Activated B cell treated with CpG ODN at 0.5 μM for 24 hours (primary cell): ENCODE measurements at regions of chr5 and their contacts with region 1.

Region 1: DNA sequence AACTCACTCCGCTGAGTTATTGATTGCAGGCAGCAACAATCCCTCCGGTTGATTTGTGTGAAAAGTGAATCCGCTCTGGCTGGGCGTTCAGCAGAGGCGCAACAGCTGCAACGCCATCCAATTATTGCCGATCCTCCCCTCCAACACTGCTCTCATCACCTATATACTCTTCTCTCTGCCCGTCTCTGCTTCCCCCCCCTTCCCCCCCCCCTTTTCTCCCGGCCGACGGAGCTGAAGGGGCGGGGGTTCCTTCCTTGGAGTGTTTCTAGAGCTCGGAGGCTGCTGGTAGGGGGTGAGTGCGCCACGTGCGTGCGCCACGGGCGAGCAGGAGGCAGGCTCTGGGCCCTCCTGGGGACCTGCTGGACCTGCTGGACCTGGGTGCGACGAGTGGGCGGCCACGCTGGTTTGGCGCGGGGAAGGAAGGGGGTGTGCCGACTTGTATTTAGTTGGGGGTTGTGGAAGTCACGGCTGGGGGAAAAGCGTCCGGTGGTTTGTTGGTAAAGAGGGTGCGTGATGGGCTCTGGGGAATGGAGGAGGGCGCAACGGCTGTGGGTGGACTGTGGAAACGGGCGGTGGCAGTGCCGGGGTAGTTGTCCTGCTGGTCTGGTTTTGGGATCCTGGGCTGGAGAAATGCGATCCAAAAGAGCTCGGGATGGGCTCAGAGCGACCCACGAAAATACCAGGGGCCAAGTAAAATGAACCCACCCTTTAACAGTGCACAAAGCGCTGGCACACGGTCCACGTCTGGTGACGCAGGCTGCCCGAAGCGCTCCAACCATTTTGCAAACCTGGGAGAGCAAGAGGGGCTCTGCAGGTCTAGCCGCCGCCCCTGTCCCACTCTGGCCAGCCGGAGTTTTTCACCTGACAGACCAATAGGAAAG is 6.4 kb upstream of the MEF2C start:
- DNase-seq: peak; percentile 61
- ATAC-seq: peak; percentile 58
- H3K4me3 Mint-ChIP-seq: peak overlapping the region; percentile 98
- H3K27ac Mint-ChIP-seq: peak overlapping the region; percentile 99
- H3K4me1 Mint-ChIP-seq: peaks cover 66% of the 10 kb centered on the region
- H3K27me3 Mint-ChIP-seq: no peaks in the 10 kb centered on the region
- CTCF ChIP-seq: no peak

Region 2: DNA sequence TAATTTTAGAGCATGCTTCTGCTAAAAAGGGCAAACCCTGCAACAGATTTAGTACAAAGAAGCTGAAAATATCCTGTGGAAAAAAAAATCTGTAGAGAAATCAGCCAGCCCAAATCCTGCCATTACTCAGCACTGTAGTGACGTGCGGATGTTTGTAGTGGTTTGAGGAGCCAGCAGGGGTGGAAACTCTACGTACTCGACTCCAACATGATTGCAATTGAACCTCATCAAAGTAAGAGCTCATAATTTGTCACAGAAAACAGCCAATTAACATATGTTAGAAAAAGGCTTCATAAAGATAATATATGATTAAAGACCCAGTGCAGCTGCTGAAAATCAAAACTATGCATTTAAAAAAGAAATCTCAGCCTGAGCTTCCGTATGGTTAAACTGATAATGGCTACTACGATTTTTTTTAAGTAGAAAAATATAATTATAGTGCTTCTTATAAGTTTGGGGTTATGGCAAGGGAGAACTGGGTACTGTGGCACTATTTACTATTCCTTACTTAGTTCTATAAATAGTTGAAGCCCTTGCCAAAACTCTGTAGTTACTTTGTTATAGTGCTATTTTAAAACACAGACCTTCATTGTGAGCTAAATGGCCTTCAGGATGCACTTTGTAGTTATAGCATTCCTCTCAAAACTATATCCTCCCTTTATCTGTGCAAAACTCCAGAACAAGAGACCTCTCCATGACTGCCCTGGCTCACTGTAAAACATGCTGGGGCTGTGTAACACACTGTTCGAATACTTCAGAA is 55.9 kb before region 1 on chr5:
- CTCF ChIA-PET with region 1: interaction called, 3 read pairs
- POLR2A ChIA-PET with region 1: interaction called, 54 read pairs
- intact Hi-C with region 1: no loop called
- DNase-seq: no peak
- ATAC-seq: peak; percentile 69
- H3K4me3 Mint-ChIP-seq: peak overlapping the region; percentile 66
- H3K27ac Mint-ChIP-seq: peak overlapping the region; percentile 87
- H3K4me1 Mint-ChIP-seq: peaks cover 81% of the 10 kb centered on the region
- H3K27me3 Mint-ChIP-seq: no peaks in the 10 kb centered on the region
- CTCF ChIP-seq: no peak

Region 3: GRCh38 chr5:89268460-89268859 is 379.0 kb after region 1 on chr5:
- CTCF ChIA-PET with region 1: no interaction called
- POLR2A ChIA-PET with region 1: interaction called, 15 read pairs
- intact Hi-C with region 1: loop called (anchors 5 kb)
- DNase-seq: no peak
- ATAC-seq: peak; percentile 27
- H3K4me3 Mint-ChIP-seq: peak overlapping the region; percentile 50
- H3K27ac Mint-ChIP-seq: peak overlapping the region; percentile 92
- H3K4me1 Mint-ChIP-seq: peaks cover 78% of the 10 kb centered on the region
- H3K27me3 Mint-ChIP-seq: no peaks in the 10 kb centered on the region
- CTCF ChIP-seq: no peak

Region 4: DNA sequence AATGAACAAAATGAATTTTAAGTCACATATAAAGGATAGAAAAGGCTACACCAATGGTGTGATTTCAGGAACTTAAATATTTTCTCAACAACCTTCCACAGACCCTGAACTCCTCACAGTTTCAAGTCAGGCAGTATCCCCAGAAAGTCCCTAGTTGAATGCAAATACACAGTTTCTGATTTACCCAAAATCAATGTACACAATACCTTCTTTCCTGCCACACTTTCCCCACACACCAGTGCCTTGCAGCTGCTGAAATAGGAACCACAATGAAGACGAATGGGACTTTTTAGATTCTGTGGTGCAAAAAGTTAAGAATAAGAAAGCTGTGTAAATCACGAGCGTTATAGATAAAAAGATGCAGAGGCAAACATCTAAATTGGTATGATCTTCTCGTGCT is 545.9 kb after region 1 on chr5:
- CTCF ChIA-PET with region 1: no interaction called
- POLR2A ChIA-PET with region 1: interaction called, 11 read pairs
- intact Hi-C with region 1: loop called (anchors 5 kb)
- DNase-seq: no peak
- ATAC-seq: peak; percentile 85
- H3K4me3 Mint-ChIP-seq: peak overlapping the region; percentile 52
- H3K27ac Mint-ChIP-seq: peak overlapping the region; percentile 86
- H3K4me1 Mint-ChIP-seq: peaks cover 73% of the 10 kb centered on the region
- H3K27me3 Mint-ChIP-seq: no peaks in the 10 kb centered on the region
- CTCF ChIP-seq: no peak

Region 5: DNA sequence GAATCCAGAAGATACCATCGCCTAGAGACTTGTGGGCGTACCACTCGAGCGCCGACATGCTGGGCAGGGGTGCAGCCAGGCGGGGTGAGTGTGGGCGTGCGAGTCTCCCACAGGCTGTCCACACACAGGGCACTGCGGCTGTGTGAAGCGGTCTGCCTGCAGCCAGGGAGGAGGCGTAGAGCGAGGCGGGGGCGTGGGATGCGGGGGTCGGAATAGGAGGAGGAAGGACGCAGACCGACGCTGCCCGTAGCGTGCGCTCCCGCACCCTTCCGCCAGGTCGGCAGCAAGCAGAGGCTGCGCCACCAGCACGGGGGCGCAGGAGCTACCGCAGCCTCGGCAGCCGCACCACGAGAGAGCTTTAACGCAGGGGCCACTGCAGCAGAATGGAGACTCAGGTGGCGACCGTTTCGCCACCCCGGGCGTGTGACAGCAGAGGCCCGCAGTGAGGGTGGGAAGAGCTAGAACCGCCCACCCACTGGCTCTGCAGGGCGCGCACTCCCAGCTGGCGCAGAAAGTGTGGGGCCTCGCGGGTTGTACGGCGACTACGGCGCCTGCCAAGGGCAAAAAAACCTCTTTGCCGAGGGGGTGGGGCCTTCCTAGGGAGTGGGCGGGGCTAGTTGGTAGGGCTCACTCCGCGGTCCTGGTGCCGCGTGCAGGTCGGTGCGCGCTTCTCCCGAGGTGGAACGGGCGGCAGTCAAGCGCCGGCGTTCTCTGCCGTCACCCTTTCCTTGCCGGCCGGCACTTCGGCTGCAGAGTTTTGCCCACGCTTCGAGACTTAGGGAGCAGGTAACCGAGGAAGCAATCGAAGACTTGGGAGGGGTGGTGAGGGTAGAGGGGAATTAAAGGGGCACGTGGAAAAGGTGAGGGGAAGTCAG is 1585.0 kb after region 1 on chr5 and contains the starts of genes MBLAC2 and POLR3G:
- CTCF ChIA-PET with region 1: no interaction called
- POLR2A ChIA-PET with region 1: no interaction called
- intact Hi-C with region 1: loop called (anchors 5 kb)
- DNase-seq: peak; percentile 86
- ATAC-seq: peak; percentile 91
- H3K4me3 Mint-ChIP-seq: peak within 1 kb of the TSS; percentile 98
- H3K27ac Mint-ChIP-seq: peak within 1 kb of the TSS; percentile 93
- H3K4me1 Mint-ChIP-seq: peaks cover 27% of the 10 kb centered on the region
- H3K27me3 Mint-ChIP-seq: no peaks in the 10 kb centered on the region
- CTCF ChIP-seq: no peak
- total RNA-seq, gene MBLAC2: 6.4 and 7.3 TPM in 2 replicates
- total RNA-seq, gene POLR3G: 2.9 and 3.1 TPM in 2 replicates